Activated B cell treated with CpG ODN at 0.5 μM for 24 hours (primary cell): ENCODE measurements at regions of chr5 and their contacts with region 1.

Region 1: DNA sequence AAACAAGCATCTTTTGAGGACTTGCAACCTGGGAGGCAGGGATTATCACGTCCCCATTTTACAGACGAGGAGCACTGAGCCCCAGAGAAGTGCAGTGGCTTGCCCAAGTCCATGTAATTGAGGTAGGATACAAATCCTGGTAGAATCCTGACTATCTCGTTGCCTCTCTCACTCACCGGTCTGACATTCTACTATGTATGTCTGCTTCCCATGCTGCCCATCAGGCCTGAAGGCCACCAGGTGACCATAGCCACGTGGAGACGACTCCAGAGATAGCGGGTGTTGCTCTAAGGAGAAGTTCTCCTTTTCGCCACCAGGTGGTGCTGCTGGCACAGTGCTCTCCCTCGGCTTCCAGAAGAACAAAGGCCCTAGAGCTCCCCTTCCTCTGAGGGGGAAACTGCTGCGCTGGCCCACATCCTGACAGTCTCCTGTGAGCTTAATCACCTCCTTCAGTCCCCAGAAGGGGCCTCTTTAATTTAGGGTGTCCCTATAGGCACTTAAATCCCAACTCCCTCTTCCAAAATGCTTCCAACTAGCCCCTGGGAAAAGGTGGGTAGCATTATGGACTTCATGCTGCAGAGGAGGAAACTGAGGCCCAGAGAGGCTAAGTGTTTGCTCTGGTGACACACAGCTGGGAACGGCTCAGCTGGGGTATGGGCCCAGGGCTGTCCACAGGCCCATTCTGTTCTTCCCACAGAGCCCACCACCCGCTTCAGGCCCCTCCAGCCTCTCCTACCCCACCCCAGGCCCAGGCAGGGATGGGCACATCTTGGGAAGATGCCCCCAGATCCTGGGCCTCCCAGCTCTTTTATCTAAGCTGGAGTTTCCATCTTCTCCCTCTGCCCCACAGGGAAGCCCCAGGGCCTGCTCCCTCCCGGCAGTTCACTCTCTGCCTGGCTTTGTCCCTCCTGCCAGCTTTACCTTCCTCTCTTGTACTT is 6.4 kb downstream of the SLC34A1 start:
- DNase-seq: peak; percentile 71
- ATAC-seq: peak; percentile 93
- H3K4me3 Mint-ChIP-seq: no peak overlapping the region
- H3K27ac Mint-ChIP-seq: no peak overlapping the region
- H3K4me1 Mint-ChIP-seq: peaks cover 29% of the 10 kb centered on the region
- H3K27me3 Mint-ChIP-seq: peaks cover 1% of the 10 kb centered on the region
- CTCF ChIP-seq: peak; percentile 29

Region 2: GRCh38 chr5:176810084-176810597 is 580.5 kb before region 1 on chr5 and contains the start of gene UNC5A:
- CTCF ChIA-PET with region 1: no interaction called
- POLR2A ChIA-PET with region 1: no interaction called
- intact Hi-C with region 1: no loop called
- DNase-seq: peak; percentile 60
- ATAC-seq: peak; percentile 80
- H3K4me3 Mint-ChIP-seq: peak within 1 kb of the TSS; percentile 82
- H3K27ac Mint-ChIP-seq: no peak within 1 kb of the TSS
- H3K4me1 Mint-ChIP-seq: peaks cover 18% of the 10 kb centered on the region
- H3K27me3 Mint-ChIP-seq: peaks cover 63% of the 10 kb centered on the region
- CTCF ChIP-seq: no peak
- total RNA-seq, gene UNC5A: not detected in 2 replicates

Region 3: GRCh38 chr5:177357459-177358351 is 32.9 kb before region 1 on chr5 and contains the start of gene RGS14:
- CTCF ChIA-PET with region 1: interaction called, 3 read pairs
- POLR2A ChIA-PET with region 1: no interaction called
- intact Hi-C with region 1: loop called (anchors 2 kb)
- DNase-seq: peak; percentile 71
- ATAC-seq: peak; percentile 89
- H3K4me3 Mint-ChIP-seq: peak within 1 kb of the TSS; percentile 85
- H3K27ac Mint-ChIP-seq: peak within 1 kb of the TSS; percentile 92
- H3K4me1 Mint-ChIP-seq: peaks cover 72% of the 10 kb centered on the region
- H3K27me3 Mint-ChIP-seq: no peaks in the 10 kb centered on the region
- CTCF ChIP-seq: no peak
- total RNA-seq, gene RGS14: 50.6 and 58.3 TPM in 2 replicates

Region 4: GRCh38 chr5:177431317-177432142 is 40.9 kb after region 1 on chr5:
- CTCF ChIA-PET with region 1: interaction called, 8 read pairs
- POLR2A ChIA-PET with region 1: interaction called, 4 read pairs
- intact Hi-C with region 1: loop called (anchors 1 kb)
- DNase-seq: peak; percentile 73
- ATAC-seq: peak; percentile 53
- H3K4me3 Mint-ChIP-seq: peak overlapping the region; percentile 88
- H3K27ac Mint-ChIP-seq: peak overlapping the region; percentile 89
- H3K4me1 Mint-ChIP-seq: peaks cover 70% of the 10 kb centered on the region
- H3K27me3 Mint-ChIP-seq: no peaks in the 10 kb centered on the region
- CTCF ChIP-seq: no peak

Region 5: GRCh38 chr5:177592010-177592834 is 201.6 kb after region 1 on chr5 and contains the start of gene TMED9:
- CTCF ChIA-PET with region 1: interaction called, 8 read pairs
- POLR2A ChIA-PET with region 1: no interaction called
- intact Hi-C with region 1: loop called (anchors 10 kb)
- DNase-seq: peak; percentile 85
- ATAC-seq: peak; percentile 98
- H3K4me3 Mint-ChIP-seq: peak within 1 kb of the TSS; percentile 100
- H3K27ac Mint-ChIP-seq: peak within 1 kb of the TSS; percentile 98
- H3K4me1 Mint-ChIP-seq: peaks cover 20% of the 10 kb centered on the region
- H3K27me3 Mint-ChIP-seq: peaks cover 7% of the 10 kb centered on the region
- CTCF ChIP-seq: no peak
- total RNA-seq, gene TMED9: 78.4 and 82.2 TPM in 2 replicates